ENCODE measurements at regions of chr7 and their contacts with region 1.

Region 1: GRCh38 chr7:36777062-36777461 is 52.8 kb upstream of the AOAH start:
- DNase-seq: peak; percentile 32
- H3K4me3 Mint-ChIP-seq: peak overlapping the region; percentile 22
- H3K27ac Mint-ChIP-seq: no peak overlapping the region
- H3K4me1 Mint-ChIP-seq: peaks cover 68% of the 10 kb centered on the region
- H3K27me3 Mint-ChIP-seq: no peaks in the 10 kb centered on the region

Region 2: DNA sequence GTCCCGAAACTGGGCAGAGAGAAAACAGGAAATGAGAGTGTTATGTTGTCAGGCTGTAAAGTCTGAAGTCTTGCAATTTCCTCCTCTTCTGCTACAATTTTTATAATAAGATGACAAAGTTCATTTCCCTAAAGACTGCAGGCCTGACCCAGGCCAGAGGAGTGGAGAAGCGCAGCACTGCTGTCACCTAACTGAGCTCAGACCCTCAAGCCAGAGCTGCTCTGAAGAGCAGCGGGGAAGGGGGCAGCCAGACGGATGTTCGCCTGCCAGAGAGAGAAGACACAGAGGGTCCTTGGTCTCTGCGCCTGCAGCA is 40.2 kb before region 1 on chr7:
- CTCF ChIA-PET with region 1: no interaction called
- POLR2A ChIA-PET with region 1: no interaction called
- intact Hi-C with region 1: loop called (anchors 5 kb)
- DNase-seq: no peak
- H3K4me3 Mint-ChIP-seq: no peak overlapping the region
- H3K27ac Mint-ChIP-seq: no peak overlapping the region
- H3K4me1 Mint-ChIP-seq: peaks cover 28% of the 10 kb centered on the region
- H3K27me3 Mint-ChIP-seq: no peaks in the 10 kb centered on the region

Measured in activated CD4-positive, alpha-beta memory T cell treated with anti-CD3 and anti-CD28 coated beads for 36 hours (primary cell).